ENCODE measurements at regions of chr20 and their contacts with region 1.

Region 1: DNA sequence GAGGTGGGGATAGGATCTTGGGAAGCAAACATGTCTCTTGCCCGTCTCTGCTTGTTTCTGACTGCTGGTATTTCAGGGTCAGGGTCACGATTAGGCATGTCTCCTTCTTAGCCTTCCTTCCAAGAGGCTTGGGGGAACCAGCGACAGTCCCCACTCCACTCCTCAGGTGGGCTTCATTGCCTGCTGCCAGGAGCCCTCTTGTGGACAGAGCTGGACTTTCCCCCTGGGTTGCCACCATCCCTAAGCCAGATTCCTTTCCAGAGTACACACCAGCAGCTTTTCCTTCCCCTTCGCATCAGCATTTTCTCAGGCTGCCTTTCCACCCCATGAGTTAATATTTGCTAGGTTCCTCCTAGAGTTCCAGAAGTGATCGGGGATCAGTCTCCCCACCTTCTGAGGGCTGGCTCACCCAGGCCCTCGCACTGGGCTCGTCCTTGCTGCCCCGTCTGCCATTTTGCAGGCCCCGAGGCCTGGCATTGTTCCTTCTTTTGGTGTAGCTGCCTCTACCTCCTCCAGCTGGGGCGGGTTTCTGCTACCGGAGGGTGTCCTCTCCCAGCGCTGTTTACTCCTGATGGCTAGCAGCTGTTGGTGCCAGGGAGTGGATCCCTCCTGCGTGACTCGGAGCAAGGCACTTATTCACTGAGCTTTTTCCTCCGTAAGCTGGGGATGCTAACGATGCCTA is 8.8 kb upstream of the C20orf144 start:
- DNase-seq: peak; percentile 75
- ATAC-seq: peak; percentile 73
- H3K4me3 ChIP-seq: no peak overlapping the region
- H3K27ac ChIP-seq: no peak overlapping the region
- H3K4me1 ChIP-seq: peaks cover 37% of the 10 kb centered on the region
- H3K27me3 ChIP-seq: no peaks in the 10 kb centered on the region
- CTCF ChIP-seq: peak; percentile 99
- EP300 ChIP-seq: no peak
- POLR2A ChIP-seq: peak in 1 of 2 experiments; percentile 66; a peak in 2 of 4 replicates
- RAD21 ChIP-seq: peak; percentile 96

Region 2: GRCh38 chr20:33450867-33451266 is 202.5 kb before region 1 on chr20:
- CTCF ChIA-PET with region 1: no interaction called
- POLR2A ChIA-PET with region 1: no interaction called
- in situ Hi-C with region 1: no loop called
- intact Hi-C with region 1: loop called (anchors 2 kb)
- DNase-seq: no peak
- ATAC-seq: peak; percentile 41
- H3K4me3 ChIP-seq: no peak overlapping the region
- H3K27ac ChIP-seq: no peak overlapping the region
- H3K4me1 ChIP-seq: 0 out of 2 replicates have a peak, but pooled peaks cover 9% of the 10 kb centered on the region
- H3K27me3 ChIP-seq: peaks cover 1 to 9% of the 10 kb centered on the region in 2 experiments; a peak in 3 of 5 replicates
- CTCF ChIP-seq: no peak
- EP300 ChIP-seq: no peak
- POLR2A ChIP-seq: no peak
- RAD21 ChIP-seq: no peak

Region 3: GRCh38 chr20:33459599-33459998 is 193.8 kb before region 1 on chr20:
- CTCF ChIA-PET with region 1: interaction called, 53 read pairs
- POLR2A ChIA-PET with region 1: no interaction called
- in situ Hi-C with region 1: loop called (anchors 5 kb)
- intact Hi-C with region 1: loop called (anchors 2 kb)
- DNase-seq: no peak
- ATAC-seq: no peak
- H3K4me3 ChIP-seq: no peak overlapping the region
- H3K27ac ChIP-seq: no peak overlapping the region
- H3K4me1 ChIP-seq: peaks cover 28% of the 10 kb centered on the region
- H3K27me3 ChIP-seq: peaks cover 0 to 4% of the 10 kb centered on the region in 2 experiments; a peak in 1 of 5 replicates
- CTCF ChIP-seq: no peak
- EP300 ChIP-seq: no peak
- POLR2A ChIP-seq: no peak
- RAD21 ChIP-seq: no peak

Region 4: DNA sequence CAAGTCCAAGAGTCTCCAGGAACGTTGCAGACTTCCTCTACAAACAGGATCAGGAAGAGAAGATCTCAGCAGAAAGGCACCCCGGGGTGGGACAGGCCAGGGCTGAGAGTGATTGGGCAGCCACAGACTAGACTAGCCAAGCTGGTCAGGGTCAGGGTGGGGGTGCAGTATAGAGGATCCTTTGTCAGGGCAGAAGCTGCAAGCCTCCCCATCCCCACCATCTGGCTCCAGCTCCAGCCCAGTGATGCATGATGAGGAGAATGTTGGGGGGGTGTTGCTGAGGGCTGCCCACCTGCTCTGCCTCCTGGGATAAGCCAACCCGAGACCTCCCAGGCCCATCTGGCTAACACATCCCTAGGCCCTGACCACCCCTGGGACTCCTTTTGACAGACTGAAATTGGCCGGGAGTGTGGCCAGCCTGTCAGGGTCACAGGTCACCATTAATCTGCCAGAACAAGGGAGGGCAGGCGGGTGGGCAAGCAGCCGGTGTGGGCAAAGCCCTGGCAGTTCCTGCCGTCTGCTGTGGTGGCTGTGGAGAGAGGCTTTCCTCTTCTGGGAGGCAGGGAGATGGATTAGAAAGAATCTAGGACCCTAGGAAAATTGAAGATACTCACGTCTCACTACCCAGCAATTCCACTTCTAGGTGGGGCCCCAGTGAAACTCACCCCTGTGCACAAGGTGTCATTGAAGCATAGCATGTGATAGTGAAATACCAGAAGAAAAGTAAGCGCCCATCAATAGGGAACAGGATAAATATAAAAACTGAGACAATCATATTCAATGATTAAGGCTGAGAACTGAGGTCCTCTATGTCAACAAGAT is 187.7 kb before region 1 on chr20:
- CTCF ChIA-PET with region 1: no interaction called
- POLR2A ChIA-PET with region 1: no interaction called
- in situ Hi-C with region 1: loop called (anchors 5 kb)
- intact Hi-C with region 1: no loop called
- DNase-seq: peak; percentile 78
- ATAC-seq: peak; percentile 92
- H3K4me3 ChIP-seq: no peak overlapping the region; a peak in 1 of 6 replicates
- H3K27ac ChIP-seq: no peak overlapping the region
- H3K4me1 ChIP-seq: peaks cover 43% of the 10 kb centered on the region
- H3K27me3 ChIP-seq: peaks cover 0 to 4% of the 10 kb centered on the region in 2 experiments; a peak in 1 of 5 replicates
- CTCF ChIP-seq: no peak
- EP300 ChIP-seq: no peak
- POLR2A ChIP-seq: no peak
- RAD21 ChIP-seq: no peak

Region 5: GRCh38 chr20:33680686-33681085 is 27.3 kb after region 1 on chr20:
- CTCF ChIA-PET with region 1: no interaction called
- POLR2A ChIA-PET with region 1: no interaction called
- in situ Hi-C with region 1: no loop called
- intact Hi-C with region 1: no loop called
- DNase-seq: no peak
- ATAC-seq: no peak
- H3K4me3 ChIP-seq: no peak overlapping the region
- H3K27ac ChIP-seq: no peak overlapping the region
- H3K4me1 ChIP-seq: peaks cover 23% of the 10 kb centered on the region
- H3K27me3 ChIP-seq: no peaks in the 10 kb centered on the region
- CTCF ChIP-seq: no peak
- EP300 ChIP-seq: no peak
- POLR2A ChIP-seq: no peak; a peak in 1 of 4 replicates
- RAD21 ChIP-seq: no peak